ENCODE measurements at regions of chr19 and their contacts with region 1.

Region 1: GRCh38 chr19:42794765-42795164 is 29.3 kb upstream of the PSG8 start:
- DNase-seq: no peak
- H3K4me3 ChIP-seq: no peak overlapping the region
- H3K27ac ChIP-seq: no peak overlapping the region
- H3K4me1 ChIP-seq: peaks cover 2% of the 10 kb centered on the region
- H3K27me3 ChIP-seq: no peaks in the 10 kb centered on the region
- CTCF ChIP-seq: no peak

Region 2: GRCh38 chr19:42450314-42450934 is 344.3 kb before region 1 on chr19:
- CTCF ChIA-PET with region 1: no interaction called
- dilution Hi-C with region 1: no loop called
- in situ Hi-C with region 1: no loop called
- intact Hi-C with region 1: loop called (anchors 10 kb)
- DNase-seq: peak; percentile 82
- H3K4me3 ChIP-seq: no peak overlapping the region
- H3K27ac ChIP-seq: no peak overlapping the region
- H3K4me1 ChIP-seq: peaks cover 14% of the 10 kb centered on the region
- H3K27me3 ChIP-seq: no peaks in the 10 kb centered on the region
- CTCF ChIP-seq: peak; percentile 79 to 83

Region 3: GRCh38 chr19:42831271-42832019 is 36.7 kb after region 1 on chr19:
- CTCF ChIA-PET with region 1: no interaction called
- dilution Hi-C with region 1: no loop called
- in situ Hi-C with region 1: no loop called
- intact Hi-C with region 1: loop called (anchors 1 kb)
- DNase-seq: peak; percentile 85
- H3K4me3 ChIP-seq: no peak overlapping the region
- H3K27ac ChIP-seq: peak overlapping the region; percentile 71
- H3K4me1 ChIP-seq: peaks cover 36% of the 10 kb centered on the region
- H3K27me3 ChIP-seq: no peaks in the 10 kb centered on the region
- CTCF ChIP-seq: peak; percentile 21 to 65

Region 4: DNA sequence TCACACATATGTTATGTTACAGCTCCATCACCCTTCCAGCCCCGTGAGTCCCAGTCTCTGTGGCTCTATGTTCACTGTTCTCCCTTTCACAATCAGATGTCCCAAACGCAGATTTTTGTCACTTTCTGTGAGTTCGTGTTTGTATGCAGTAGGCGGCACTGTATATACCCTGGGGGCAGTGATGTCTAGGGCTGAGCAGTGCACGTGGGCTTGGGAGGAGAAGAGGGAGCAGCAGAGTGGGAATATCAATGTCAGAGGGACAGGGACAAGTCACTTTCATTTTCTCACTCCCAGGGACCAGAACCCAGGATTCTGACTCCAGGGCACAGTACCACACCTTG is 62.8 kb after region 1 on chr19:
- CTCF ChIA-PET with region 1: no interaction called
- dilution Hi-C with region 1: no loop called
- in situ Hi-C with region 1: loop called in 1 of 2 experiments (anchors 10 kb)
- intact Hi-C with region 1: loop called (anchors 1 kb)
- DNase-seq: no peak
- H3K4me3 ChIP-seq: no peak overlapping the region
- H3K27ac ChIP-seq: no peak overlapping the region
- H3K4me1 ChIP-seq: peaks cover 8% of the 10 kb centered on the region
- H3K27me3 ChIP-seq: no peaks in the 10 kb centered on the region
- CTCF ChIP-seq: no peak

Region 5: GRCh38 chr19:42919511-42920021 is 124.8 kb after region 1 on chr19:
- CTCF ChIA-PET with region 1: interaction called, 4 read pairs
- dilution Hi-C with region 1: no loop called
- in situ Hi-C with region 1: no loop called
- intact Hi-C with region 1: loop called (anchors 1 kb)
- DNase-seq: no peak
- H3K4me3 ChIP-seq: no peak overlapping the region
- H3K27ac ChIP-seq: no peak overlapping the region
- H3K4me1 ChIP-seq: no peaks in the 10 kb centered on the region
- H3K27me3 ChIP-seq: no peaks in the 10 kb centered on the region
- CTCF ChIP-seq: peak; percentile 50 to 61

Region 6: DNA sequence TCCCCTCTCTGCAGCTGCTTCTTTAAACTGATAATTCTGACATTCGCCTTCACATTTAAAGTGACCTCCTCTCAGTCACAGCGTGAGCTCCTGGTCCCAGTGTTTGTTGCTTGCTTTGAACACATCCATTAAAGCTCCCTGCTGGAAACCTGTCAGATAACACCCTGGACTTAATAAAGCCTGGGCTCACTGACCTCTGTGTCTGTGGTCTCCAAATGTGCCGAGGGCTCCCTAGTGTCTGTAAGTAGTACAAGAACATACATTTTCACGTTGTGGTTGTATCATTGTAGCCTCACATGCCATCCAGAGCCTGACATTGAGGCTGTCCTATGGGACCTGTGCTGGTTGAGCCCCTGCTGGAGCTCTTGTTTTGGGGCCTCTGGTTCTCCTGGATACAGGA is 413.2 kb after region 1 on chr19:
- CTCF ChIA-PET with region 1: no interaction called
- dilution Hi-C with region 1: no loop called
- in situ Hi-C with region 1: no loop called
- intact Hi-C with region 1: loop called (anchors 10 kb)
- DNase-seq: no peak
- H3K4me3 ChIP-seq: no peak overlapping the region
- H3K27ac ChIP-seq: no peak overlapping the region
- H3K4me1 ChIP-seq: peaks cover 14% of the 10 kb centered on the region
- H3K27me3 ChIP-seq: no peaks in the 10 kb centered on the region
- CTCF ChIP-seq: no peak

Measured in mammary epithelial cell (primary cell).